HCT116 (cell line): ENCODE measurements at regions of chr17 and their contacts with region 1.

Region 1: GRCh38 chr17:71460943-71461342 is 659.9 kb upstream of the SOX9 start:
- DNase-seq: peak; percentile 28
- ATAC-seq: peak; percentile 68; the same call in 1 of the 2 replicates
- H3K4me3 ChIP-seq: no peak overlapping the region
- H3K27ac ChIP-seq: no peak overlapping the region
- H3K4me1 ChIP-seq: no peaks in the 10 kb centered on the region
- H3K27me3 ChIP-seq: no peaks in the 10 kb centered on the region
- CTCF ChIP-seq: peak; percentile 53 to 75 (median 66)
- POLR2A ChIP-seq: no peak
- RAD21 ChIP-seq: peak; percentile 74

Region 2: GRCh38 chr17:71084219-71084618 is 376.7 kb before region 1 on chr17:
- CTCF ChIA-PET with region 1: interaction called, 13 read pairs
- POLR2A ChIA-PET with region 1: no interaction called
- RAD21 ChIA-PET with region 1: no interaction called
- intact Hi-C with region 1: loop called (anchors 10 kb)
- DNase-seq: peak; percentile 69
- ATAC-seq: peak; percentile 87
- H3K4me3 ChIP-seq: no peak overlapping the region
- H3K27ac ChIP-seq: no peak overlapping the region
- H3K4me1 ChIP-seq: peaks cover 0 to 6% of the 10 kb centered on the region in 2 experiments; a peak in 1 of 4 replicates
- H3K27me3 ChIP-seq: no peaks in the 10 kb centered on the region
- CTCF ChIP-seq: peak; percentile 69 to 78 (median 73); a peak in 5 of 6 replicates
- POLR2A ChIP-seq: no peak
- RAD21 ChIP-seq: peak; percentile 85

Region 3: GRCh38 chr17:71237903-71238538 is 222.9 kb before region 1 on chr17:
- CTCF ChIA-PET with region 1: interaction called, 15 read pairs
- POLR2A ChIA-PET with region 1: no interaction called
- RAD21 ChIA-PET with region 1: interaction called in 1 of 2 experiments, 4 read pairs
- intact Hi-C with region 1: loop called (anchors 2 kb)
- DNase-seq: peak; percentile 57
- ATAC-seq: peak; percentile 96
- H3K4me3 ChIP-seq: no peak overlapping the region
- H3K27ac ChIP-seq: no peak overlapping the region
- H3K4me1 ChIP-seq: no peaks in the 10 kb centered on the region
- H3K27me3 ChIP-seq: no peaks in the 10 kb centered on the region
- CTCF ChIP-seq: peak; percentile 38 to 66 (median 64)
- POLR2A ChIP-seq: no peak
- RAD21 ChIP-seq: peak; percentile 89

Region 4: GRCh38 chr17:71441098-71441497 is 19.8 kb before region 1 on chr17:
- CTCF ChIA-PET with region 1: interaction called, 16 read pairs
- POLR2A ChIA-PET with region 1: no interaction called
- RAD21 ChIA-PET with region 1: interaction called in 1 of 2 experiments, 3 read pairs
- intact Hi-C with region 1: no loop called
- DNase-seq: peak; percentile 79
- ATAC-seq: peak; percentile 76
- H3K4me3 ChIP-seq: peak overlapping the region in 1 of 2 experiments; percentile 7; a peak in 1 of 4 replicates
- H3K27ac ChIP-seq: no peak overlapping the region
- H3K4me1 ChIP-seq: peaks cover 19 to 38% of the 10 kb centered on the region in 2 experiments
- H3K27me3 ChIP-seq: no peaks in the 10 kb centered on the region
- CTCF ChIP-seq: no peak
- POLR2A ChIP-seq: no peak
- RAD21 ChIP-seq: no peak

Region 5: DNA sequence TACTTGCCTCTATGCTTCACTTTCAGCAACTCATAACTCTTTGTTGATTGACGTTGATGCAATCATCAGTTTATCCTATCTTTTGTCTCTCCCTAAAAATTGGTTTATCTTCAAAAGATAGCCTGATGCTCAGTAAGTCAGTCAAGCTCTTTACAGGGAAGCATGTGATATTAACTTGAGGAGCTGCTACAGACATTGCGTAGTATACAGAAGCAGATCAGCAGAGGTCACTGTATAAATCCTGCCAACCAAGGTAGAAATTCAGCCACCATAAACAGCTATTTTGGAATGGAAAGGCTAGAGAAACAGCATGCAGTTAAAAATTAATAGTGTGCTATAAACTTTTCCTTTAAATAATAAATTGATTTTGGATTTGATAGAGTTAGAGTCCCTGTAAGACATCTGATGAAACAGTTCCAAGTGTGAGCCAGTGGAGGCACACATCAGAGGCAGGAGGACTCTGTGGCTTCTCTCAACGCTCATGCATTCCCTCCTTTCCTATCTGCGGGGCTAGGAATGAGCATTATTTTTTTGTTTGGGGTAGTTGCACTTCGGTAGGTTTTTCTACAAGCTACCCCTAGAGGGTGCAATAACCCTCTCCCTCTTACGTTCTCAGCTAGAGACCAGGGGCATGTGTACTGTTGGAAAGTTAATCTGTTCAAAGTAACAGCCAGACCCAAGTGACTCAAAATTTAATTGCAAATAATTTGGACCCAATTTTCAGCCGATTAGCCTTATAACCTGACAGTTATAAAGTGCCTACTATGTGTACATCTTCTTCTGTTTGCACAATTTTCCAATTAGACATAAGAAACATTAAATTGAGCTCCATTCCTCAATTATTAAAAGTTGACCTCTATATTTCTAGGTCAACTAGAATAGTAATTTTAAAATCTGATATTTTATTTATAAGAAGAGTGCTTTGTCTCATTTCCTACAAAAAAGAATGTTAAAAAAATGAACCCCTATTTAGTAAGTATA is 12.2 kb after region 1 on chr17:
- CTCF ChIA-PET with region 1: interaction called, 51 read pairs
- POLR2A ChIA-PET with region 1: interaction called, 3 read pairs
- RAD21 ChIA-PET with region 1: no interaction called
- intact Hi-C with region 1: no loop called
- DNase-seq: peak; percentile 86
- ATAC-seq: peak; percentile 99
- H3K4me3 ChIP-seq: no peak overlapping the region
- H3K27ac ChIP-seq: no peak overlapping the region
- H3K4me1 ChIP-seq: peaks cover 0 to 11% of the 10 kb centered on the region in 2 experiments; a peak in 2 of 4 replicates
- H3K27me3 ChIP-seq: no peaks in the 10 kb centered on the region
- CTCF ChIP-seq: peak; percentile 79 to 93 (median 88)
- POLR2A ChIP-seq: no peak
- RAD21 ChIP-seq: peak; percentile 89